ENCODE measurements at regions of chr15 and their contacts with region 1.

Region 1: DNA sequence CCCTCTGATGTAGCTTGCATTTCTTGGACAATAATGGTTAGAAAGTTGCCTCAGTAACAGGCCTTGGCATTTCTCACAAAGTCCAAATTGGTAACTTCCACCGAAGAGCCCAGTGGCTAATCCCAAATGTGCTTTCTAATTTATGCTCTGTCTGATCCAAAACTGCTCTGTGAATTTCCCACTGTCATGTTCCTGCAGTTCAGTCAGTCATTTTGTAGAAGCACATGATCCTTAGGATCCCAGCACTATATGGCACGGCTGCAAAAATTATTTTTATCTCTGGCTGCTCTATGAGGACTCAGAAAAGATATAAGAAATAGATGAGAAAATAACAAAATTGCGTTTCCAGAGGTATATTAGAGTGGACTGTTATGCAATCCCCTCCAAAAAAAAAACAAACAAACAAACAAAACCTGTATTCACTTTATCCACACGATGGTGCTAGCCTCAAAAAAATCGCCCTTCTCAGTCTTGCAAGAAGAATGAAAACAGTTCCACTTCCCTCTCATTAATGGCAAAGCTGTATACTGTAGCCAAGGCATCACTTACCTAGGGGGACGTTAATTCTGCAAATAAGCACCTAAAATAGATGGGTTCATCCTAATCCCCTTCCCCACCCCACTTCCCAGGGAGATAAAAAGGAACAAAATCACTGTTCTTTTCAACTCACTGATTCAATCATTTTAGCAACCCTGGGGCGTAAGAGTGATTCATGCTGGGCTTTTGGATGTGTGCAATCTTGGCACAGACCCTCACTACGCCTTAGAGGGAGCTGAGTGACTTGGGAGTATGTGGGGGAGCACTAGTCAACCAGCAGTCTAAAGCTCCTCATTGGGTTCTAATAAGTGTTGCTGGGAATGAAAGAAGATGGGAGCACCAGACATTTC is 61.3 kb downstream of the TMCO5A start:
- DNase-seq: peak; percentile 73
- H3K4me3 ChIP-seq: no peak overlapping the region
- H3K27ac ChIP-seq: no peak overlapping the region
- H3K4me1 ChIP-seq: peaks cover 6% of the 10 kb centered on the region
- H3K27me3 ChIP-seq: no peaks in the 10 kb centered on the region
- CTCF ChIP-seq: peak; percentile 62 to 63

Region 2: GRCh38 chr15:38389924-38390542 is 394.3 kb after region 1 on chr15:
- CTCF ChIA-PET with region 1: no interaction called
- dilution Hi-C with region 1: no loop called
- in situ Hi-C with region 1: loop called in 1 of 2 experiments (anchors 10 kb)
- intact Hi-C with region 1: loop called (anchors 2 kb)
- DNase-seq: peak; percentile 47
- H3K4me3 ChIP-seq: no peak overlapping the region
- H3K27ac ChIP-seq: no peak overlapping the region
- H3K4me1 ChIP-seq: no peaks in the 10 kb centered on the region
- H3K27me3 ChIP-seq: no peaks in the 10 kb centered on the region
- CTCF ChIP-seq: peak; percentile 89 to 95

Region 3: DNA sequence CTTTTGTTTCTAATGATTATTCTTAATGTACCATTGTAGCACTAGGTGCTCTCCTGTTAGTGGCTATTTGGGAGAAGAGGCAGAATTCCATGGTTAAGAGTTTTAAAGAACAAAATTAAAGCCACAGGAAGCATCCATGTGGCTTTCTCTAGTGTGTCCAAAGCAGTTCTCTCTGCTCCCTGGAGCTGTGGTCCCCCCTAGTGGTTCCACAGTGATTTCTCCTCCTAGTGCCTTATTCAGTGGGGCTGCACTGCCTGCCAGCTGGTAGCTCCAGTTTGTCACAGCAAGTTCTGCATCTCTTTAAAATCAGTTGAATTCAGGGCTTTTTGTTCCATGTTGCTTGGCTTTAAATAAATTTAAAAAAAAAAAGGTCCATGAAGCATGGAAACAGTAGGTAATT is 418.7 kb after region 1 on chr15:
- CTCF ChIA-PET with region 1: interaction called, 4 read pairs
- dilution Hi-C with region 1: no loop called
- in situ Hi-C with region 1: no loop called
- intact Hi-C with region 1: loop called (anchors 1 kb)
- DNase-seq: peak; percentile 53
- H3K4me3 ChIP-seq: no peak overlapping the region
- H3K27ac ChIP-seq: no peak overlapping the region
- H3K4me1 ChIP-seq: no peaks in the 10 kb centered on the region
- H3K27me3 ChIP-seq: peaks cover 9% of the 10 kb centered on the region
- CTCF ChIP-seq: peak; percentile 80

Region 4: GRCh38 chr15:38440353-38441129 is 444.8 kb after region 1 on chr15:
- CTCF ChIA-PET with region 1: interaction called, 10 read pairs
- dilution Hi-C with region 1: no loop called
- in situ Hi-C with region 1: no loop called
- intact Hi-C with region 1: no loop called
- DNase-seq: peak; percentile 46
- H3K4me3 ChIP-seq: no peak overlapping the region
- H3K27ac ChIP-seq: no peak overlapping the region
- H3K4me1 ChIP-seq: no peaks in the 10 kb centered on the region
- H3K27me3 ChIP-seq: no peaks in the 10 kb centered on the region
- CTCF ChIP-seq: peak; percentile 93 to 95

Region 5: DNA sequence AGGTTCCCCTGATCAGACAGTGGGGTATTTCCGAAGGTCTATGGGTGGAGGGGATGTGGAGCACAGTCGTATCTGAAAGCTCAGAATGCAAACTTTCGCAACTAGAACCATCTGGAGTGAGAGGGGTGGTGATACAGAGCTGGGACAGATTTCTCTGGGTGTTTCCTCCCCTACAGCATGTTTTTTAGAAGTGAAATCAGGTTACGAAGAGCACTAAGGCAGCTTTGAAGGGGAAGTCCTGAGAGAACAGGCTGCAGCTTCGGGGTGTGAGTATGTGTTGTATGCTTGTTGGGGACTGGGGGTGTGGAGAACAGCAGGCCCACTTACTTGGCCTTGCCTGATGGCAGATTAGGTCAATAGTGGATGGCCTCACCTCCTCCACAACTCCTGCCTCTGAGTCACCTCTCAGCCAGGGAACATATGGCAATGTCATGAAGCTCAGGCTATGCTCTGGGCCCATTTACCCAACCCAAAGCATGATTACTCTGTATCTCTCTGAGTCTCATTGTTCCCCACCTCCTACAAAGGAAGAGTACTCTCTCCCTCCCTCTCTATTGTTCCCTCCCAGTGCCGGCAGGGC is 676.1 kb after region 1 on chr15:
- CTCF ChIA-PET with region 1: no interaction called
- dilution Hi-C with region 1: no loop called
- in situ Hi-C with region 1: loop called in 1 of 2 experiments (anchors 25 kb)
- intact Hi-C with region 1: no loop called
- DNase-seq: no peak
- H3K4me3 ChIP-seq: no peak overlapping the region
- H3K27ac ChIP-seq: no peak overlapping the region
- H3K4me1 ChIP-seq: no peaks in the 10 kb centered on the region
- H3K27me3 ChIP-seq: no peaks in the 10 kb centered on the region
- CTCF ChIP-seq: no peak

Region 6: GRCh38 chr15:38683382-38684242 is 687.9 kb after region 1 on chr15:
- CTCF ChIA-PET with region 1: no interaction called
- dilution Hi-C with region 1: no loop called
- in situ Hi-C with region 1: no loop called
- intact Hi-C with region 1: loop called (anchors 2 kb)
- DNase-seq: peak; percentile 32
- H3K4me3 ChIP-seq: no peak overlapping the region
- H3K27ac ChIP-seq: no peak overlapping the region
- H3K4me1 ChIP-seq: peaks cover 4% of the 10 kb centered on the region
- H3K27me3 ChIP-seq: no peaks in the 10 kb centered on the region
- CTCF ChIP-seq: peak; percentile 86 to 89

Region 7: GRCh38 chr15:38699633-38700230 is 704.0 kb after region 1 on chr15:
- CTCF ChIA-PET with region 1: interaction called, 5 read pairs
- dilution Hi-C with region 1: no loop called
- in situ Hi-C with region 1: loop called in 1 of 2 experiments (anchors 10 kb)
- intact Hi-C with region 1: loop called (anchors 1 kb)
- DNase-seq: peak; percentile 45
- H3K4me3 ChIP-seq: no peak overlapping the region
- H3K27ac ChIP-seq: no peak overlapping the region
- H3K4me1 ChIP-seq: peaks cover 6% of the 10 kb centered on the region
- H3K27me3 ChIP-seq: no peaks in the 10 kb centered on the region
- CTCF ChIP-seq: peak; percentile 91 to 94